Endothelial cell of umbilical vein (primary cell): ENCODE measurements at regions of chr1 and their contacts with region 1.

Region 1: DNA sequence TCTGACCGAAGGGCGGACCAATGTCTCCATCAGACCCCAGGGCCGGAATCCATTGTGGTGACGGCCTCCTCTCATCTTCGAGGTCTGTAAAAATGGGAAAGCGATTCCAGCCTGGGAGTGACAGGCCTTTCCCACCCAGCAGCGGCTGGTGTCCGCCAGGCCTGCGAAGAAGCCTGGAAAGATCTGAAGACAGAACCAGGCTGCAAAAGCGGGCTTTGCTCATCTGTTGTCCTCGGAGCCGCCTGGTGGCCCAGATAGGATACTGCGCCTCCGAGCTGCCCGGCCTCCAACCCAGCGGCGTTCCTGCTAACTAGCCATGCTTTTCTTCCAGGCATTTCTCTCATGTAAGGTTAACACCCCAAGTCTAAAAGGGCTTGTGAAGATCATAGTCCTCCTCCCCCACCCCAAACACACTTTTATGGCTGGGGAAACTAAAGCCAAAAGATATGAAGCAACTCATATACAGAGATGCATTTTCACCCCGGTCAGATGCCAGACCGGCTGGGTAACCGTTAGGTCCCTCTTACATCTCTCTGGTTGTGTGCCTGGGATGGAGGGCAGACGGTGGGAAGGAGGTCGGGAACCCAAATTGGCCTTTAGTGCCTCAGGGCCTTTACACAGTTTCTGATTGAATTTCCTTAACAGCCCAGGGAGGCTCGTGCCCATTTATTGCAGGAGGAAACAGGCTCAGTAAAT is 1.9 kb upstream of the DHRS3 start:
- DNase-seq: peak; percentile 85
- H3K4me3 ChIP-seq: no peak overlapping the region
- H3K27ac ChIP-seq: peak overlapping the region; percentile 73
- H3K4me1 ChIP-seq: peaks cover 27% of the 10 kb centered on the region
- H3K27me3 ChIP-seq: no peaks in the 10 kb centered on the region
- CTCF ChIP-seq: peak; percentile 92 to 96
- POLR2A ChIP-seq: no peak

Region 2: DNA sequence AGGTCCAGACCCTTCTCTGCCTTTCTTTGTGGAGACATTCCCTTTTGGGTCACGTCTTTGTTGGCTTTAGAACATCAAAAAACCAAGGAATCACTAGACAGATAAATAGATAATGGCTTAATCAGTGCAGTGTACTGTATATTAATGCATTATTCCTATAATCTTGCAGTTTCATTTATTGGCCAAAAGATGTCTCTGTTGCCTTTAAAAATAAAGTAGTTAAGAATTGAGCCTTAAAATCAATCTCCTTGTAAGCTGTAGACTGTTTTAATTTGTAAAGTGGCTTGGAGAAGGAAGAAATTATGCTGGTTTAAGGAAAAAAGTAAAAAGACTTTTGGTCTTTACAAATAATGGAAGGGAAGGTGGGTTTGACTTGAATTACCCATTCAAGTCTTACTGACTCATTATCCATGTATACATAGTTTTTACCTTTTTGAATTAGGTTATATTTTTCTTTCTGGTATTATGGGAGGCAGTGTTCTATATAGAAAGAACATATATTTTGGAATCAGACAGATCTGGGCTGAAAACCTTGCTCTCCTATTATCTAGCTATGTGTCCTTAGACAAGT is 305.5 kb before region 1 on chr1:
- CTCF ChIA-PET with region 1: interaction called, 131 read pairs
- POLR2A ChIA-PET with region 1: no interaction called
- dilution Hi-C with region 1: no loop called
- intact Hi-C with region 1: loop called (anchors 1 kb)
- DNase-seq: peak; percentile 42
- H3K4me3 ChIP-seq: no peak overlapping the region
- H3K27ac ChIP-seq: no peak overlapping the region
- H3K4me1 ChIP-seq: no peaks in the 10 kb centered on the region
- H3K27me3 ChIP-seq: no peaks in the 10 kb centered on the region
- CTCF ChIP-seq: peak; percentile 10 to 19
- POLR2A ChIP-seq: no peak

Region 3: DNA sequence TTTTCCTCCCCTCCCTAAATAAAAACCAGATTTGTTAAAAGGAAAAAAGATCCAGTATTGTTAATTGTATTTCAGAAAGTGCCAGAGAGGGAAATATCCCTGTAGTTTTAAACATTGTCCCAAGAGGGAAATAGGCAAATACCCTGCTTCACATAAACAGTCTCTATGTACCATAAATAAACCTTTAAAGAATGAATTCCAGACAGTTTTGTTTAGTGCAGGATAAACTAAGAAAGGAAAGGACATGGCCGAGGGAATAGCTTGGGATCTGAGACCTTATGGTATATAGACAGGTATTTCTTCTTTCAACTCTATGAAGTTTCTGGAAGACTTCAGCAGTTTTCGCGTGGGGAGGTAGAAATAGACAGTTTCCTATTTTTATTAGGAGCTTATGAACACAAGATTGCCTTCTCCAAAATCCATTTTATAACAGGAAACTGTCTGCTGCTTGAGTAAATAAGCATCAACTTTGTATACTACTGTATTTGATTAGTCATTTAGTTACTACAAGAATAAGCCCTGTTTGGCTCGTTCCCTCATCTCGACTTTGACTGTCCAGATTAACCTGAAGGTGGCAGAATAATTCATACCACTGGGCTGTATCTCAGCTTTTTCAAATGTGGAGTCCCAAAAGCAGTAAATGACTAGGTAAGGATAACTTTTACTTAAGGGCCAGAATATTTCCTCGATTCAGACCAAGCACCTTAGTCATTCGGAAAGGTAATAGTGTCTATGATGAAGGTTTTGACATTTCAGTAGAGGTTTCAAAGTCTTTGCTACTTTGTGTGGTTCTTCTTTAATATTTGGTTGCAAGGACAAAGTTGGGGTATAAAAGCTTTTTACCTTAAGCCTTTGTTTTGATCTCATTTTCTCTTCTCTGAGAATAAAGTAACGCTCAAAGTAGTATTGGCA is 212.6 kb before region 1 on chr1:
- CTCF ChIA-PET with region 1: interaction called, 59 read pairs
- POLR2A ChIA-PET with region 1: interaction called, 3 read pairs
- dilution Hi-C with region 1: no loop called
- intact Hi-C with region 1: loop called (anchors 1 kb)
- DNase-seq: peak; percentile 91
- H3K4me3 ChIP-seq: no peak overlapping the region
- H3K27ac ChIP-seq: no peak overlapping the region
- H3K4me1 ChIP-seq: peaks cover 33% of the 10 kb centered on the region
- H3K27me3 ChIP-seq: no peaks in the 10 kb centered on the region
- CTCF ChIP-seq: peak; percentile 23 to 24
- POLR2A ChIP-seq: no peak

Region 4: GRCh38 chr1:12477936-12478611 is 141.9 kb before region 1 on chr1:
- CTCF ChIA-PET with region 1: interaction called, 12 read pairs
- POLR2A ChIA-PET with region 1: no interaction called
- dilution Hi-C with region 1: no loop called
- intact Hi-C with region 1: loop called (anchors 1 kb)
- DNase-seq: peak; percentile 96
- H3K4me3 ChIP-seq: no peak overlapping the region
- H3K27ac ChIP-seq: peak overlapping the region; percentile 66
- H3K4me1 ChIP-seq: peaks cover 61% of the 10 kb centered on the region
- H3K27me3 ChIP-seq: no peaks in the 10 kb centered on the region
- CTCF ChIP-seq: no peak
- POLR2A ChIP-seq: no peak

Region 5: DNA sequence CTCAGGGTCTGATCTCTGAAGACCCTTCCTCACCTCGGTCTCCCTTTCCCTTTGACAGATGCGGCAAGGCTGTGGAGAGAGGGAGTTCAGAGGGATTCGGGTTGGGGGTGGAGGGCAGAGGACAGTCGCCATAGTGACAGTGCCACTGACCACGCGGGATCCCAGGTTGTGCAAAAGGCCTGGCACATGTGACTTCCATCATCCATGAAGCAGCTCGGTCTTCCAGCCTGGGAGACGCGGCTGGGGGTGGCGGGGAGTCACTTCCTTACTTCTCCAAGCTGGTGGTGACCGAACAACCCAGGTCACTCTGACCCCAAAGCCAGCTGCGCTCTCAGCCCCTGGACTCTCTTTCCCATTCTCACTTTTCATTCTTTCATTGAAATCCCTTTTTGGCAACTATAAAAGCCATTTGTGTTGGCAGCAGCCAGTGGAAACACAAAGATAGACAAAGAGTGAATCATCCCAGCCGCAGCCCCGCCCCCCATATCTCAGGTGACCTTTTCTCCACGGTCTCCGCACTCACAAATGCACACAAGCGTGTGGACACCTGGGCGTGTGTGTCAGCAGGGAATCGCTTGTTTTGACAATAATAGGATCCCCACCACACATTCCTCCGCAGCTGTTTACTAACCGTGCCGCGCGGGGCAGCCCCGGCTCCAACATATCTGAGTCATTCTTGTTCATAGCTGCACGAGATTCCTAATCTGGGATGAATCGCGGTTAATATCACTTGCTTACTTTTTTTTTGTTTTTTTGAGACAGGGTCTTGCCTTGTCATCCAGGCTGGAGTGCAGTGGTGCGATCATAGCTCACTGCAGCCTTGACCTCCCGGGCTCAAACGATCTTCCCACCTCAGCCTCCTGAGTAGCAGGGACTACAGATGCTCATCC is 70.2 kb before region 1 on chr1:
- CTCF ChIA-PET with region 1: interaction called, 5 read pairs
- POLR2A ChIA-PET with region 1: interaction called, 4 read pairs
- dilution Hi-C with region 1: no loop called
- intact Hi-C with region 1: loop called (anchors 1 kb)
- DNase-seq: peak; percentile 98
- H3K4me3 ChIP-seq: peak overlapping the region in 1 of 3 experiments; percentile 1
- H3K27ac ChIP-seq: peak overlapping the region; percentile 91
- H3K4me1 ChIP-seq: peaks cover 16% of the 10 kb centered on the region
- H3K27me3 ChIP-seq: no peaks in the 10 kb centered on the region
- CTCF ChIP-seq: no peak
- POLR2A ChIP-seq: no peak

Region 6: GRCh38 chr1:12630946-12631530 is 11.1 kb after region 1 on chr1:
- CTCF ChIA-PET with region 1: interaction called, 16 read pairs
- POLR2A ChIA-PET with region 1: no interaction called
- dilution Hi-C with region 1: no loop called
- intact Hi-C with region 1: no loop called
- DNase-seq: no peak
- H3K4me3 ChIP-seq: no peak overlapping the region
- H3K27ac ChIP-seq: no peak overlapping the region
- H3K4me1 ChIP-seq: peaks cover 8% of the 10 kb centered on the region
- H3K27me3 ChIP-seq: peaks cover 0 to 2% of the 10 kb centered on the region in 2 experiments
- CTCF ChIP-seq: no peak
- POLR2A ChIP-seq: no peak